Natural killer cell (primary cell): ENCODE measurements at regions of chr12 and their contacts with region 1.

Region 1: DNA sequence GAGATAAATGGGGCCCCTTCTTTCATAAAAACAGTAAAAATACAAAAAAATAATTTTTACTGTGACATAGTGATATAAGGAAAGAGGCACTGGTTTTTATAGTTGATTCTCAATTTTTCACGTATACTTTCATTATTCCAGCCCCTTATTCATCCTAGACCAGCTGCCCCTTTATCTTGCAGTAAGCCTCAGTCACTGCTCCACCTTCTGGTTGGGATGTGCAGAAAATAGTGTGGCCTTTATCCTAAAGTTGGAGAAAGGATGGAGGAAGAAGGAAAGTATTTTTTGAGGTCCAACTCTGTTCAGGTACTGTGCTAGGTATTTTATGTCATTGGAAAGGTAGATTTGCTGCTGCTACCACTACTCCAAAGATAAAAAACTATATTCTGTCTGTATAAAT is 172.7 kb downstream of the ANO6 start:
- DNase-seq: peak in 1 of 2 donors; percentile 34
- ATAC-seq: no peak
- H3K4me3 ChIP-seq: no peak overlapping the region
- H3K4me3 Mint-ChIP-seq: no peak overlapping the region
- H3K27ac ChIP-seq: no peak overlapping the region
- H3K27ac Mint-ChIP-seq: no peak overlapping the region
- H3K4me1 ChIP-seq: no peaks in the 10 kb centered on the region
- H3K4me1 Mint-ChIP-seq: no peaks in the 10 kb centered on the region
- H3K27me3 ChIP-seq: no peaks in the 10 kb centered on the region
- H3K27me3 Mint-ChIP-seq: no peaks in the 10 kb centered on the region
- CTCF ChIP-seq: peak; percentile 27

Region 2: GRCh38 chr12:45170456-45171042 is 218.0 kb before region 1 on chr12:
- intact Hi-C with region 1: loop called (anchors 2 kb)
- DNase-seq: peak; percentile 64 to 84
- ATAC-seq: peak; percentile 57 to 83 (median 74)
- H3K4me3 ChIP-seq: no peak overlapping the region
- H3K4me3 Mint-ChIP-seq: no peak overlapping the region
- H3K27ac ChIP-seq: no peak overlapping the region
- H3K27ac Mint-ChIP-seq: no peak overlapping the region
- H3K4me1 ChIP-seq: no peaks in the 10 kb centered on the region
- H3K4me1 Mint-ChIP-seq: no peaks in the 10 kb centered on the region
- H3K27me3 ChIP-seq: no peaks in the 10 kb centered on the region
- H3K27me3 Mint-ChIP-seq: no peaks in the 10 kb centered on the region
- CTCF ChIP-seq: peak; percentile 89